SK-N-SH (cell line): ENCODE measurements at regions of chr2 and their contacts with region 1.

Region 1: GRCh38 chr2:133844214-133844892 is 276.1 kb upstream of the NCKAP5 start:
- DNase-seq: peak; percentile 78
- H3K4me3 ChIP-seq: peak overlapping the region in 1 of 2 experiments; percentile 32; a peak in 1 of 4 replicates
- H3K27ac ChIP-seq: peak overlapping the region in 1 of 2 experiments; percentile 92; a peak in 2 of 4 replicates
- H3K4me1 ChIP-seq: peaks cover 0 to 30% of the 10 kb centered on the region in 2 experiments; a peak in 3 of 4 replicates
- H3K27me3 ChIP-seq: no peaks in the 10 kb centered on the region
- CTCF ChIP-seq: peak; percentile 93
- EP300 ChIP-seq: no peak
- RAD21 ChIP-seq: peak; percentile 96

Region 2: DNA sequence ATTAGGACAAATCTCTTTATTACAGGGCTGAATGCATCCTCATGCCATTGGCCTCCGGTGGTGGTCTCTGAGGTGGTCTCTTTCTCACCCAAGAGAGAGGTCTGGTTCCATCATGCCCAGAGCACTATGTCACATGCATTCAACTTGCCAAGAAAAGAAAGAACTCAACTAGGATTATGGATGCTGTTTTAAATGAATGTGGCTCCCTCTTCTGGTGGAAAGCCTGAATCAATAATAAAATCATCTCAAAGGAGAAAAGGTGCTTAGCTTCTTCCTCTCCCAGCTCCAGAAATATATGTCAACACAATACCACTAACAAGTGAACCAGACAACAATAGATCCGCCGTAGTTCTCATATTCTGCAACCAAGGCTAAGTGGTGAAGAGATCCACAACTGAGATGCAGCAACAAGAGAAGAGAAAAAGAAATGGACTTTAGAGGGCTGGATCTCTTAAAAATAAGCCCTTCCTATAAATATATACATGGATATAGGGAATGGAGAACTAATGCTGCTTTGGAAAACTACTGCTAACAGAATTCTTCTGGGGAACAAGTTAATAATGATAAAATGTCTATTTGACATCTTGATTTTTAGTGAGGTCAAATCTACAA is 672.9 kb before region 1 on chr2:
- CTCF ChIA-PET with region 1: interaction called, 16 read pairs
- POLR2A ChIA-PET with region 1: no interaction called
- DNase-seq: peak; percentile 30
- H3K4me3 ChIP-seq: no peak overlapping the region
- H3K27ac ChIP-seq: no peak overlapping the region
- H3K4me1 ChIP-seq: peaks cover 5 to 13% of the 10 kb centered on the region in 2 experiments; a peak in 3 of 4 replicates
- H3K27me3 ChIP-seq: no peaks in the 10 kb centered on the region
- CTCF ChIP-seq: peak; percentile 78
- EP300 ChIP-seq: no peak
- RAD21 ChIP-seq: peak; percentile 94

Region 3: GRCh38 chr2:133561045-133561852 is 283.1 kb before region 1 on chr2:
- CTCF ChIA-PET with region 1: interaction called, 11 read pairs
- POLR2A ChIA-PET with region 1: no interaction called
- DNase-seq: peak; percentile 41
- H3K4me3 ChIP-seq: no peak overlapping the region; a peak in 1 of 4 replicates
- H3K27ac ChIP-seq: no peak overlapping the region
- H3K4me1 ChIP-seq: peaks cover 0 to 13% of the 10 kb centered on the region in 2 experiments; a peak in 1 of 4 replicates
- H3K27me3 ChIP-seq: no peaks in the 10 kb centered on the region
- CTCF ChIP-seq: peak; percentile 83
- EP300 ChIP-seq: no peak
- RAD21 ChIP-seq: peak; percentile 88

Region 4: DNA sequence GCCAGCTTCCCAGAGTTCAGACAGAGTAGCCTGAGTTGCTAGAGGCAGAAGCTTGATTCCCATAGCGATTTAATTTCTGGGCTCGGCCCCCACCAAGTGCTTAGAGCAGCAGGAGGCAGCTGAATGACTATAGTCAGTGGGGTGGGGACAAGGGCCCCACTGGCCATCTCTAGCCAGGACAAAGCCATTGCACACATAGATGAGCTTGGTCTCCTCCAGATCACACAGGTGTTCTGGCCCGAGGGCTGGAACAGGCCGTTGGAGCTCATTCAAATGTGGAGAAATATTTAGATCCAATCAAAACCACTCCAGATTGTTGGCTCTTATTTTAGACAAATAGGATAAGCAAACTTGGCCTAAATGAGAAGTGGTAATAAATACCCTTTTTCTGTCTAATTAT is 11.2 kb after region 1 on chr2:
- CTCF ChIA-PET with region 1: interaction called, 28 read pairs
- POLR2A ChIA-PET with region 1: no interaction called
- DNase-seq: no peak
- H3K4me3 ChIP-seq: no peak overlapping the region
- H3K27ac ChIP-seq: no peak overlapping the region
- H3K4me1 ChIP-seq: peaks cover 0 to 2% of the 10 kb centered on the region in 2 experiments; a peak in 1 of 4 replicates
- H3K27me3 ChIP-seq: no peaks in the 10 kb centered on the region
- CTCF ChIP-seq: no peak
- EP300 ChIP-seq: no peak
- RAD21 ChIP-seq: no peak

Region 5: GRCh38 chr2:133886735-133887660 is 42.6 kb after region 1 on chr2:
- CTCF ChIA-PET with region 1: interaction called, 11 read pairs
- POLR2A ChIA-PET with region 1: no interaction called
- DNase-seq: peak; percentile 65
- H3K4me3 ChIP-seq: no peak overlapping the region; a peak in 1 of 4 replicates
- H3K27ac ChIP-seq: no peak overlapping the region
- H3K4me1 ChIP-seq: peaks cover 0 to 9% of the 10 kb centered on the region in 2 experiments; a peak in 1 of 4 replicates
- H3K27me3 ChIP-seq: no peaks in the 10 kb centered on the region; the same call in 1 of the 2 replicates
- CTCF ChIP-seq: peak; percentile 69
- EP300 ChIP-seq: no peak
- RAD21 ChIP-seq: peak; percentile 86